Activated T-helper 2 cell treated with anti-CD3 and anti-CD28 coated beads, Interferon-gamma antibody, Interleukin-2, Interleukin-4, amounts not matched to agents 10 μg/mL and 5 μg/mL and 100 μg/mL, durations not matched to agents 14 hours and 24 hours and 36 hours (primary cell): ENCODE measurements at regions of chr14 and their contacts with region 1.

Region 1: DNA sequence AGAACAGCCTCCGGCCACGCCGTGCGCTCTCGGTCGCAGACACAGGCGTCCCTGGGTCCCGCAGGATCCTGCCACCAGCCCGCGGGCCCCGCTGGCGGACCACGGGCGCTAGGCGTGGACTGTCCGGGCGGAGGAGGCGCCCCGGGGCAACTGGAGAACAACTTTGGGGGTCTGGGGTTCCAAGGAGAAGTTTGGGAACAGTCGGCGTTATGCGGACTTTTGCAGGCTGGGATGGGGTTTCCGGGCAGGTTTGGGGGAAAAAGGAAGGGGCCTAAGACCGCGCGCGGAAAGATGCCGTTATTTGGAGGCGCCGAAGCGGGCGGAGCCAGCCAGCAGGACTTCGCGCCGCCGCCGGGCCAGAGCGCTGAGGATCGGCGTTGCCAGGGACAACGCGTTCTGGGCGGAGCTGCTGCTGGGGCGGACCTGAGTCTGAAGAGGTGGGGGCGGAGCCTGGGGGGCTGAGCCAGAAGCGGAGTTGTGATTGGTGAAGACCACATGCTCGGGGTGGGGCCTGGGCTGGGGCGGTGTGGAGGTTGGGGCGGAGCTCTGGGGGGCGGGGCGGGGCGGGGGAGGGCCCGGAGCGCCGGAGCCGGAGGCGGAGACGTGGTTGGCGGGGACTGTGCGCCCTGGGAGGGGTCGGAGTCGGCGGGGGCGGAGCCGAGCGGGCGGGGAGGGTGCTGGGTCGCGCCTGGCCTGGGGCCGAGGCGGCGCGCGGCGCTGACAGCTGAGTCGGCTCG is at the start of gene CYP46A1:
- DNase-seq: peak; percentile 99
- H3K4me3 Mint-ChIP-seq: peak within 1 kb of the TSS; percentile 84
- H3K27ac Mint-ChIP-seq: peak within 1 kb of the TSS; percentile 68
- H3K4me1 Mint-ChIP-seq: peaks cover 3% of the 10 kb centered on the region
- H3K27me3 Mint-ChIP-seq: peaks cover 29% of the 10 kb centered on the region
- total RNA-seq, gene CYP46A1: not detected in 2 replicates

Region 2: GRCh38 chr14:99192028-99192621 is 491.7 kb before region 1 on chr14:
- intact Hi-C with region 1: no loop called
- DNase-seq: peak; percentile 33
- H3K4me3 Mint-ChIP-seq: peak overlapping the region; percentile 91
- H3K27ac Mint-ChIP-seq: peak overlapping the region; percentile 96
- H3K4me1 Mint-ChIP-seq: peaks cover 76% of the 10 kb centered on the region
- H3K27me3 Mint-ChIP-seq: no peaks in the 10 kb centered on the region

Region 3: DNA sequence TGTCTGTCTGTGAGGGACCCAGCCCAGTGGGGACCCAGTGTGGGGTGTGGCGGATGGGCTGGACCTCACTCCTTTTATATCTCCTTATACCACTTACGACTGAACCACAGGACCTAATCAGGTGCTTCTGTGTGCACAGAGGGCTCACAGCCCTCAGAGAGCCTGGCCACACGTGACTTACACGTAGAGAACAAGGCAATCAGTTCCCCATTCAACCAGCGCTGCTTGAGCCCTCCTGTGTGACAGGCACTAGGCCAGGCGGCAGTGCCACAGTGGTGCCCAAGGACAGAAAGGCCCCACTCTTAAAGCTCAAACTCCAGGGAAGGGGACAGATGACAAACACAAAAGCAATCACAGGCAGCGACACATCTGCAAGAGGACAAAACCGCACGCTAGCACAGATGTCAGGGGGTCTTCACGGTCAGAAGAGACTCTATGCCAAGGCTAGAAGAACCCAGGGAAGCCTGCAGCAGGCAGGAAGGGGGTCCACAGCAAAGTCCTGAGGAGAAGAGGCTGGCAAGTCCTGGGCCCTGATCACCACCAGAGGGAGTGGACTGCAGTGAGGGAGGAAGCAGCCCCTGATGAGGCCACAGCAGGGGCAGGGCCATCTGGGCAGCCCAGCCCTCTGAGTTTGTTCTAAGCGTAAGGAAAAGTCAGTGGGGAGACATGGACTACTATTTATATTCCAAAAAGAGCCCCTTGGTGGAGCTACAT is 242.5 kb before region 1 on chr14:
- intact Hi-C with region 1: no loop called
- DNase-seq: no peak
- H3K4me3 Mint-ChIP-seq: no peak overlapping the region
- H3K27ac Mint-ChIP-seq: peak overlapping the region; percentile 20
- H3K4me1 Mint-ChIP-seq: peaks cover 31% of the 10 kb centered on the region
- H3K27me3 Mint-ChIP-seq: no peaks in the 10 kb centered on the region

Region 4: GRCh38 chr14:99604283-99604765 is 79.5 kb before region 1 on chr14:
- intact Hi-C with region 1: loop called (anchors 5 kb)
- DNase-seq: peak; percentile 93
- H3K4me3 Mint-ChIP-seq: peak overlapping the region; percentile 86
- H3K27ac Mint-ChIP-seq: peak overlapping the region; percentile 87
- H3K4me1 Mint-ChIP-seq: peaks cover 18% of the 10 kb centered on the region
- H3K27me3 Mint-ChIP-seq: peaks cover 6% of the 10 kb centered on the region

Region 5: GRCh38 chr14:99729991-99730868 is 46.4 kb after region 1 on chr14:
- intact Hi-C with region 1: no loop called
- DNase-seq: peak; percentile 55
- H3K4me3 Mint-ChIP-seq: peak overlapping the region; percentile 39
- H3K27ac Mint-ChIP-seq: no peak overlapping the region
- H3K4me1 Mint-ChIP-seq: no peaks in the 10 kb centered on the region
- H3K27me3 Mint-ChIP-seq: peaks cover 13% of the 10 kb centered on the region